Right cardiac atrium (tissue), 5 donors: ENCODE measurements at regions of chr21 and their contacts with region 1.

Region 1: DNA sequence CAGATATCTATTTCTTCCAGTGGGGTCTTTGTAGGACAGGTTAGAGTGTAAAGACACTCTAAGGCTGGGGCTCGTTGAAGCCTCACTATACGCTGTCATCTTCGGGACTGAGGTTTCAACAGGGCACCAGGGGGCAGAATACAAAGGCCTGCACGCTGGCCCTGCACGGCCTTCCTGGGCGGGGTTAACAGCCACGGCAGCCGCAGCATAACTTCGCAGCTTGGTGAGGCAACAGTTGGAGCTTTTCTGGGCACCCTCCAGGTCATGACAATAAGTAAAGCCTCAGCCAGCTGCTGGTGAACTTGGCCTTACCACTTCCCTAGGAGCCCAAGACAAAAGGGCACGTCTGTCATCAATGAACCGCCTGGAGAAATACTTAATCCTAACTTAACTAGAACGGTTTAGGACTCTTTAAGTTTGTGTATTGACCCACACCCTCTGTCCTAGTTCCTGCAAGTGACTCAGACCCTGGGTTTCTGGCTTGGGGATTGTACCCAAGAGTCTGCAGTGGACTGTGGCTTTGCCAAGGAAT is 2.3 kb upstream of the RUNX1 start:
- DNase-seq: peak; percentile 91 to 95 (median 93)
- ATAC-seq: peak; percentile 94 to 95
- H3K4me3 ChIP-seq: no peak overlapping the region
- H3K27ac ChIP-seq: peak overlapping the region; percentile 45
- H3K4me1 ChIP-seq: no peaks in the 10 kb centered on the region
- H3K27me3 ChIP-seq: no peaks in the 10 kb centered on the region

Region 2: GRCh38 chr21:35390013-35390776 is 338.8 kb after region 1 on chr21:
- intact Hi-C with region 1: loop called in 1 of 4 experiments (anchors 10 kb)
- DNase-seq: no peak
- ATAC-seq: no peak
- H3K4me3 ChIP-seq: no peak overlapping the region
- H3K27ac ChIP-seq: no peak overlapping the region
- H3K4me1 ChIP-seq: no peaks in the 10 kb centered on the region
- H3K27me3 ChIP-seq: no peaks in the 10 kb centered on the region

Region 3: GRCh38 chr21:35840197-35840799 is 788.9 kb after region 1 on chr21:
- intact Hi-C with region 1: loop called in 1 of 4 experiments (anchors 10 kb)
- DNase-seq: peak in 2 of 3 donors; percentile 53 to 79
- ATAC-seq: peak in 1 of 2 donors; percentile 65
- H3K4me3 ChIP-seq: no peak overlapping the region
- H3K27ac ChIP-seq: no peak overlapping the region
- H3K4me1 ChIP-seq: no peaks in the 10 kb centered on the region
- H3K27me3 ChIP-seq: no peaks in the 10 kb centered on the region